T-cell (primary cell): ENCODE measurements at regions of chr7 and their contacts with region 1.

Region 1: GRCh38 chr7:2546776-2547571 is 8.3 kb downstream of the BRAT1 start:
- DNase-seq: peak in 1 of 35 experiments; percentile 2
- ATAC-seq: no peak
- H3K4me3 ChIP-seq: no peak overlapping the region
- H3K4me3 Mint-ChIP-seq: no peak overlapping the region
- H3K27ac ChIP-seq: no peak overlapping the region
- H3K27ac Mint-ChIP-seq: no peak overlapping the region
- H3K4me1 ChIP-seq: peaks cover 0 to 7% of the 10 kb centered on the region in 2 experiments
- H3K4me1 Mint-ChIP-seq: peaks cover 14 to 29% (median 17%) of the 10 kb centered on the region in 3 donors
- H3K27me3 ChIP-seq: peaks cover 0 to 2% of the 10 kb centered on the region in 2 experiments
- H3K27me3 Mint-ChIP-seq: no peaks in the 10 kb centered on the region

Region 2: GRCh38 chr7:1060315-1061072 is 1486.5 kb before region 1 on chr7:
- CTCF ChIA-PET with region 1: interaction called in 1 of 2 experiments, 13 read pairs
- POLR2A ChIA-PET with region 1: no interaction called
- DNase-seq: no peak
- ATAC-seq: no peak
- H3K4me3 ChIP-seq: no peak overlapping the region
- H3K4me3 Mint-ChIP-seq: no peak overlapping the region
- H3K27ac ChIP-seq: no peak overlapping the region
- H3K27ac Mint-ChIP-seq: no peak overlapping the region
- H3K4me1 ChIP-seq: peaks cover 3 to 21% of the 10 kb centered on the region in 2 experiments
- H3K4me1 Mint-ChIP-seq: peaks cover 6 to 25% (median 8%) of the 10 kb centered on the region in 3 donors
- H3K27me3 ChIP-seq: peaks cover 0 to 20% of the 10 kb centered on the region in 2 experiments
- H3K27me3 Mint-ChIP-seq: peaks cover 0 to 4% of the 10 kb centered on the region in 2 donors

Region 3: DNA sequence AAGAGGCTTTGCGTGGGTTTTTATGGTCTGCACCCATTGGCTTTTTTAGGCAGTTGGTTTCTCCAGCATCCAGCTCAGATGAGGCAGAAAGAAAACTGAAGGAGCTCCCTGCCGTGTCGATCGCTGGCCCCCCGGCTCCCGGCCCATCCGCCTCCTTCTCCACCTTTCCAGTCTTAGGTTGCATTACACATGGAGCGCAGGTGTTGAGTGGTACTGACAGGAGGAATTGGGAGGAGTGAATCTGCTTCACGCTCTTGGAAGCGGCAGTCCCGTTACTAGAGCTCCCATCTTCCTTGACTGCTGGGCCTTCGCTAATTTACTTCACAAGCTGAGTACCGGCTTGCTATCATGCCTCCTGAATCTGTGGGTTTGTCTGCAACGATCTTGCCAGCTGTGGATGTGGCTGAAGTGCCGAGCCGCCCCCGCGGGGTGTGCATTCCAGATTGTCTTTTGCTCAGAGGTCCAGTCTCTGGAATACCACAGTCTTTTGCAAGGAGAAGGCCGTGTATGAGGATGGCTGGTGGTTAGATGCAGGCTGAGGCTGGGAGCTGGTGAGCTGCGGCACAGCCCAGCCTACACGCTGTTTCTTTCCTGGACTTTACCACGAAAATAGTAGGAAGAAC is 28.9 kb after region 1 on chr7:
- CTCF ChIA-PET with region 1: no interaction called
- POLR2A ChIA-PET with region 1: no interaction called
- DNase-seq: no peak
- ATAC-seq: no peak
- H3K4me3 ChIP-seq: no peak overlapping the region
- H3K4me3 Mint-ChIP-seq: no peak overlapping the region
- H3K27ac ChIP-seq: no peak overlapping the region
- H3K27ac Mint-ChIP-seq: no peak overlapping the region
- H3K4me1 ChIP-seq: no peaks in the 10 kb centered on the region
- H3K4me1 Mint-ChIP-seq: no peaks in the 10 kb centered on the region
- H3K27me3 ChIP-seq: no peaks in the 10 kb centered on the region
- H3K27me3 Mint-ChIP-seq: no peaks in the 10 kb centered on the region

Region 4: GRCh38 chr7:4006687-4007086 is 1459.7 kb after region 1 on chr7:
- CTCF ChIA-PET with region 1: no interaction called
- POLR2A ChIA-PET with region 1: no interaction called
- DNase-seq: no peak
- ATAC-seq: no peak
- H3K4me3 ChIP-seq: no peak overlapping the region
- H3K4me3 Mint-ChIP-seq: no peak overlapping the region
- H3K27ac ChIP-seq: no peak overlapping the region
- H3K27ac Mint-ChIP-seq: no peak overlapping the region
- H3K4me1 ChIP-seq: no peaks in the 10 kb centered on the region
- H3K4me1 Mint-ChIP-seq: no peaks in the 10 kb centered on the region
- H3K27me3 ChIP-seq: peaks cover 0 to 3% of the 10 kb centered on the region in 2 experiments
- H3K27me3 Mint-ChIP-seq: peaks cover 4 to 8% of the 10 kb centered on the region in 2 donors